ENCODE measurements at regions of chr22 and their contacts with region 1.

Region 1: DNA sequence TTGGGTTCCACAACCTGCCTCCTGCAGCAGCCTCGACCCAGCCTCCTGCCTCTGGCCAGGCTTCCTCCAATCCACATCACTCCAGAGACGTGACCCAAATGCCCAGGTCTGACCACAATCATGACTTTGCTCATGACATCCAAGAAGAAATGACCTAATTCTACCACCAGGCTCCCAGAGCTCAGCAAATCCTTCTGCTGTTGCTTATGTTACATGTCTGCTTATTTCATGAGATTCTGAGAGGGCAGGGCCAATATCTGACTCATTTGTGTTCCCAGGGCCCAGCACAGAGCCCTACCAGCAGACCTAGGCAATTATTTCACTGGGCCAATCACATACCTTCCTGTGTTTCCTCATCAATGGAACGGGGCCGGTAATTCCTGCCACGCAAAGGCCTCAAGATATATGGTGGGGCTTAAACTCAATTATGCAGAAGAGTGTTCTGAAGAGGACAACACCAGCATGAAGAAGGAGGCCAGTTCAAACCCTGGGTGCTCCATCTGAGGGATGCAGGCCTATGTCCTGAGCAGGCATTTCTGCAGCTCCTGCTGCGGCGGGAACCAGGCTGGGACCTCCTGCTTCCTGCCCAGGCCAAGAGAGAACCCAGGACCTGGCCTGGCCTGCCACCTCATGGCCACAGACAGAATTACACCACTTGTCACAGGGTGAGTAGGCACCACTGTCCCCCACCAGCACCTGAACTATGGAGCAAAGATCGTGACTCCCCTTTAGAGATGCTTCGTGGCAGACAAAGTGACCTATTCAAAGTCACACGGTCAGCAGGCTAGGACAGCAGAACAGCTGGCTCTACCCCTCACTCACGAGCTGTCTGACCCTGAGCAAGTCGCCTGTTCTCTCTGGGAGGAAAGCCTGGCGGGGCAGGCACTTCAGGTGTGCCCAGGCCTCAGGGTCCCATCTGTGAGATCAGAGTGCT is 5.9 kb downstream of the CENPM start:
- DNase-seq: peak; percentile 86
- ATAC-seq: peak; percentile 85 to 90

Region 2: DNA sequence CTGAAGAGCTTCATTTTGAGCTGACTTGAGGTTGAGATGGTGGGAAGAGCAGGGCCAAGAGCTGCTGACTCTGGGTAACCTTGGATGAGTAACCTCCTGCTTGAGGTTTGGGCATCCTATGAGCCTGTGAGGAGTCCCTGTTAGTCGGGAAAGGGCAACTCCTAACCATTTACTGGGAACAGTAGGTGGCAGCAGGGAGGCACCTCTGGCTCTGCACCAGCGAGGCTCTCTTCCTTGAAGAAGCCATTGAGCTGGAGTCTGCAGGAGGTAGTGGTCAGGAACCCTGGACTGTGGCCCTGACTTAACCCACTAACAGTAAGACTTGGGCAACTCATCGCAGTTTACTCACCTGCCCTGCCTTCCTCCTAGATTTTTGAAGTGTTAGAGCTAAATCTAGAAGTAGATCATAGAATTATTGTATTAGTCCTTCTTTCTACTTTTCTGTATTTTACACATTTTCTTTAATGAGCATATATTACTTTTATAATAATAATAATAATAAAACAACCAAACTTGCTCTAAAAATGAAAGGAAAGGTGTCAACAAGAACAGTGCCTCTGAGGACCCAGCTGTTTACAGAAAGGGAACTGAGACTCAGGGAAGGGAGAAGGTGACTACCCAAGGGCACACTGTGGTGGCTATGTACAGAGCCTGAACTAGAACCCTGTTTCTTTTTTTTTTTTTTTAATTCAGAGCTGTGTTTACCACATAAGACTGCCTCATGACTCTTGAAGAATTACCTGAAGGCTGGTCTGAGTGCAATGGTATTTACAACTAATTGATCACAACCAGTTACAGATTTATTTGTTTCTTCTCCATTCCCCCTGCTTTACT is 194.3 kb before region 1 on chr22:
- intact Hi-C with region 1: loop called (anchors 2 to 5 kb)
- DNase-seq: peak; percentile 68
- ATAC-seq: peak; percentile 90 to 96

Region 3: DNA sequence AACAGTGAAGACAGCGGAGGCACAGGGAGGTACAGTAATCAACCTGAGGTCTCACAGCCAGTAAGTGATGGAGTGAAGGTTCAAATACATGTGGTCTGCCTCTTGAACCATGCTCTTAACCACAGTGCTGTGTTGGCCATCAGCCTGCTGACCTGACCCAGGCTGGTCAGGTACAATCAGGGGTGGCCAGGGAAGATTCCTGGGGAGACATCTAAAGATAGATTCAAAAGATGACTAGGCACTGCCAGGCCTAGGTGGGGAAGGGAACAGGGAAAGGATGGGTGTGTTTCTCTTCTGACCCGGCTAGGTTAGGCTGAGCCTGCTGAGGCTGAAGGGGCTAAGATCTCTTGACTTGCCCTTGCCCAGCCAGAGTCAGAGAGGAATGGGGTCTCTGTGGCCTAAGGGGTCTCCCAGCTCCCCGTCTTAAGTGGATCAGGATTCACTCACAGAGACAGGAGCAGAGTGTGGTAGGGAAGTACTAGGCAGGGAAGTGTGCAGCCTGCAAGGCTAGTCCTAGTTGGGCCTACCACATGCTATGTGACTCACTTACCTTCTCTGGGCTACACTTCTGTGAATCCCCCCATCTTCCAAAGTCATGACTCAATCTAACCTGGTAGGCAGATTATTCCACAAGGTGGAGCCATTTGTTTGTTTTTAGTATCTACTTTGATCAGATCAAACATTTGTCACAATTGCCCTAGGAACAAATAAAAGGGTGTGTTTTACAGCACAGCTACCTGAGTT is 118.6 kb before region 1 on chr22:
- intact Hi-C with region 1: loop called (anchors 1 to 5 kb)
- DNase-seq: no peak
- ATAC-seq: no peak

Region 4: GRCh38 chr22:42114721-42115120 is 173.6 kb after region 1 on chr22:
- intact Hi-C with region 1: no loop called
- DNase-seq: no peak
- ATAC-seq: peak in 1 of 2 donors; percentile 30

Measured in left cardiac atrium (tissue), 4 donors.